ENCODE measurements at regions of chr1 and their contacts with region 1.

Region 1: DNA sequence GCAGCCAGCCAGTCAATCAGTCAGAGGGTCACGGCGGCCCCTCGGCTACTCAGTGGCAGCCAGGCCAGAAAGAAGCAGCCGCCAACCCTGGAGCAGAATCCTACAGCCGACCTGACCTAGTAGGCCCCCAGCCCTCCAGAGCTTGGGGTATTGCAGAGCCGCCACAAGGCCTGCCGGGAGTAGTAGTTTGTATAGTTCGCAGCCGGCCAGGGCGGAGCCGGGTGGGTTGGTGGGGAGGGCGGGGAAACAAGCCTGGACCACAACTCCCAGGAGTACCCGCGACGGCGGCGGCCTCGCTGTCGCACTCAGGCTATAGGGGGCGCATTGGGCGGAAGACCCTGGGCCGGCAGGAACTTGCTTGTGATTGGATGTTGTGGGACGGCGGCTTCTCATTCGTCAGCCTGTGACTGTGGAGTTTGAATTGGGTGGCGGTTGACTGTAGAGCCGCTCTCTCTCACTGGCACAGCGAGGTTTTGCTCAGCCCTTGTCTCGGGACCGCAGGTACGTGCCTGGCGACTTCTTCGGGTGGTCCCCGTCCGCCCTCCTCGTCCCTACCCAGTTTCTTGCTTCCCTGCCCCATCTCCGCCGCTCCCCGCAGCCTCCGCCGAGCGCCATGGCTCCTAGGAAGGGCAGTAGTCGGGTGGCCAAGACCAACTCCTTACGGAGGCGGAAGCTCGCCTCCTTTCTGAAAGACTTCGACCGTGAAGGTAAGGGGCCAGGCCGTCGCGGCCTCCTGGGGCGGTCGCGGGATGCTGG is at the start of gene CDCA8:
- DNase-seq: peak; percentile 99
- ATAC-seq: peak; percentile 91
- H3K4me3 Mint-ChIP-seq: peak within 1 kb of the TSS; percentile 98
- H3K27ac Mint-ChIP-seq: peak within 1 kb of the TSS; percentile 78; the same call in 1 of the 2 replicates
- H3K4me1 Mint-ChIP-seq: peaks cover 16% of the 10 kb centered on the region
- H3K27me3 Mint-ChIP-seq: no peaks in the 10 kb centered on the region; the same call in 1 of the 2 replicates
- CTCF ChIP-seq: peak; percentile 27; the same call in 1 of the 2 replicates
- total RNA-seq, gene CDCA8: 42.1 to 47.7 TPM (median 43.3 TPM) in 3 replicates

Region 2: DNA sequence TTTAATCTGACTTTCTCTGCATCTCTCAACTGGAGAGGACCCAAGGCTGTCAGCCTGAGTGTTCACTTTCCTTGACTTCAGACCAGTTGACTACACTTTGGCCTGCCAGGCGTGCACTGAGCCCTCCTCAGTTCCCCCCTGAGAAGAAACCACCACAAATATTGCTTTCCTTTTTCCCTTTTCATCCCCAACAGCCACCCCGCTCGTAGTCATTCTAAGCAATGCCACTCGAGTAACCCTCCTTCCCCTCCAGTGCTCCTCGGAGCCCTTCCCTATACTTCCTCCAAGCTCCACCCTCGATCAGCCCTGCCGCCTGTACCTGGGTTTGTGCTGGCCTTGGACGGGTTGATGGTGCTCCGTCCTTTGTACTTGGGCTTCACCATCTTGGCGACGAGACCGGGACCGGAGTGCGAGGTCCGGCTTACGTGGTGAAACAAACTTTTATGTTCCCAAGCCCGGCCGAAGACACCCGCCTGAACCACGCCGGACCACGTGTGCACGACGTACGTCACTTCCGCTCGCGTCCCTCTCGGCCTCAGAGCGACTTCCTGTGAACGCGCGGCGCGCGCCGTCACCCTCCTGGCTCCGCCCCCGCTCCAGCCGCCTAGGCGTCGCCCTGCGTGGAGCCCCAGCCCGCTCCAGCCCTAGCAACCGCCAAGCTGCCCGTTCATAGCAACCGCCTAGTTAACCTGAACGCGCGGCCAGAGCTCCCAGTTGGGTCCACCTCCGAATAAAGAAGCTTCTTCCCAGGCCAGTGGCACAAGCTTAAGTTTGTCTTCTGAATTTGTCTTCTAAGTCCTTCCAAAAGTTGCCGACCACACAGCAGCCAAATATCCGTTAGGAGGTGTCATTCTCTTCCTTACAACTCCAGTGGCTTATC is 96.6 kb before region 1 on chr1 and contains the start of gene GNL2:
- CTCF ChIA-PET with region 1: interaction called, 18 read pairs
- POLR2A ChIA-PET with region 1: interaction called, 3 read pairs
- DNase-seq: peak; percentile 98
- ATAC-seq: peak; percentile 99
- H3K4me3 Mint-ChIP-seq: peak within 1 kb of the TSS; percentile 99
- H3K27ac Mint-ChIP-seq: peak within 1 kb of the TSS; percentile 99
- H3K4me1 Mint-ChIP-seq: peaks cover 15% of the 10 kb centered on the region
- H3K27me3 Mint-ChIP-seq: peaks cover 10% of the 10 kb centered on the region
- CTCF ChIP-seq: no peak
- total RNA-seq, gene GNL2: 72.3 to 92.8 TPM (median 75.9 TPM) in 3 replicates

Measured in WTC11 (cell line).